PC-9 (cell line): ENCODE measurements at regions of chr1 and their contacts with region 1.

Region 1: GRCh38 chr1:85307987-85308832 is 31.8 kb upstream of the BCL10 start:
- DNase-seq: peak; percentile 50 to 87
- H3K4me3 ChIP-seq: no peak overlapping the region
- H3K27ac ChIP-seq: no peak overlapping the region
- H3K4me1 ChIP-seq: peaks cover 3% of the 10 kb centered on the region
- H3K27me3 ChIP-seq: no peaks in the 10 kb centered on the region
- CTCF ChIP-seq: peak; percentile 81

Region 2: GRCh38 chr1:85494904-85495266 is 186.7 kb after region 1 on chr1:
- CTCF ChIA-PET with region 1: no interaction called
- POLR2A ChIA-PET with region 1: no interaction called
- intact Hi-C with region 1: loop called (anchors 1 kb)
- DNase-seq: peak in 1 of 2 experiments; percentile 46
- H3K4me3 ChIP-seq: no peak overlapping the region; the same call in 1 of the 2 replicates
- H3K27ac ChIP-seq: peak overlapping the region; percentile 51
- H3K4me1 ChIP-seq: peaks cover 35% of the 10 kb centered on the region
- H3K27me3 ChIP-seq: no peaks in the 10 kb centered on the region
- CTCF ChIP-seq: no peak

Region 3: GRCh38 chr1:85692730-85693314 is 384.6 kb after region 1 on chr1:
- CTCF ChIA-PET with region 1: interaction called, 4 read pairs
- POLR2A ChIA-PET with region 1: interaction called, 3 read pairs
- intact Hi-C with region 1: loop called (anchors 1 kb)
- DNase-seq: peak in 1 of 2 experiments; percentile 67
- H3K4me3 ChIP-seq: no peak overlapping the region
- H3K27ac ChIP-seq: peak overlapping the region; percentile 35
- H3K4me1 ChIP-seq: peaks cover 3% of the 10 kb centered on the region; the same call in 1 of the 2 replicates
- H3K27me3 ChIP-seq: no peaks in the 10 kb centered on the region
- CTCF ChIP-seq: peak; percentile 86

Region 4: DNA sequence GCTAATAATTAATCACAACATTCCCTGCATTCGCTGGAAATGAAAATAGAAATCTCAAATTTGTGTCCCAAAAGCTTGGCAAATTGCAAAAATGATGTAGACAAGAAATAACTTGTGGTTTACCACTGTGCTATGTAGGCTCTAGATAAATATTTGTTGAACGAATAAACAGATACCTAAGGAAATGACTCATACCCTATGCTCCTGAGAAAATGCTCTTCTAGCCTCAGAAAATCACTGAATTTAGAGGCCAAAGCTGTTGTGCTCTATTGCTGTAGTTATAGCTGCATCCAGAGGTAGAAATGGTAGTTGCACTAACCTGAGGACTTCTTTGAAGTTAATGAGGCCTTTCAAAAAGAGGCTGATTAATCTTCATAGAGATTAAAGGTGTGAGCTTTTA is 542.0 kb after region 1 on chr1:
- CTCF ChIA-PET with region 1: no interaction called
- POLR2A ChIA-PET with region 1: no interaction called
- intact Hi-C with region 1: loop called (anchors 1 kb)
- DNase-seq: peak; percentile 17 to 97
- H3K4me3 ChIP-seq: no peak overlapping the region
- H3K27ac ChIP-seq: peak overlapping the region; percentile 61
- H3K4me1 ChIP-seq: peaks cover 29% of the 10 kb centered on the region
- H3K27me3 ChIP-seq: no peaks in the 10 kb centered on the region
- CTCF ChIP-seq: peak; percentile 57

Region 5: DNA sequence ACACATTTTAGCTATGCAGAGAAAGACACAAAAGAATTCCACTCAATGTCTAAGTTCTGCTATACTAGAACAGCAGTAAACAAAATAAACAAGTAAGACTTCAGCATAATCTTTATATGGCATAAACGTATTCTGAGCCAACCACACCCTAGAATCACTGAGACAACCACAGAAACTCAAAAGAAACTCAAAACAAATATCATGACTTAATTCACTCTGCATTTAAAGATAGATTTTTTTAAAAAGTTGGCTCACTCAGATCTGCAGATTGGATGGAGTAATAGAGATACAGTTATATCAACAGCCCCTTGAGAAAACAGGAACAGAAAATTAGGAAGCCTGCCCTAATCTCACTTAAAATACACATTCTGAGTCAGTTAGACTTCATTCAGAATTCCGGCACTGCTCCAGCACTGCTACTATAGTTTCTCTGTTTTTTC is 753.4 kb after region 1 on chr1:
- CTCF ChIA-PET with region 1: no interaction called
- POLR2A ChIA-PET with region 1: interaction called, 13 read pairs
- intact Hi-C with region 1: no loop called
- DNase-seq: no peak
- H3K4me3 ChIP-seq: no peak overlapping the region
- H3K27ac ChIP-seq: no peak overlapping the region
- H3K4me1 ChIP-seq: no peaks in the 10 kb centered on the region
- H3K27me3 ChIP-seq: no peaks in the 10 kb centered on the region
- CTCF ChIP-seq: no peak